Dendritic cell treated with granulocyte-macrophage colony-stimulating factor and Interleukin-4, amounts not matched to agents 40 ng/mL and 50 ng/mL, for 4 days (primary cell): ENCODE measurements at regions of chr1 and their contacts with region 1.

Region 1: DNA sequence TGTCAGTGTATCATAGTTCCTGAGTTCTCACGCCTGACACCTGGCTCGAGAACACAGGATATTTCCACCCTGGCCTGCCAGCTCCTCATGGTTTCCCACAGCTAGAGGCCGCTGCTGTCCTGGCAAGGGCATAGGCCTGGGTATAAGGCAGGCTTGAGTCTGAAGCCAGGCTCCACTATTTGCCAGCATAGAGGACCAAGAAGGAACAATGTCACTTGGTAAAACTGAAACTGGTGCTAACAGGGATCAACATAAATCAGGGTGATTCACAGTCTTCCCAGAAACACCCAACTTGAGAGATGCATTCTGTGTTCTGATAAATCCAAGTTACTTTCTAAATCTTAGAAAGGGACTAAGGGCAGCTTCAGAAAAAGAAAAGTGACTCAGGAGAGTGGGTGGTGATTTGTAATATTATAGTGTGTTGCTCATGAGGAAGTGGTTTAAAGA is 6.9 kb upstream of the S100A2 start:
- H3K4me3 Mint-ChIP-seq: no peak overlapping the region
- H3K27ac Mint-ChIP-seq: peak overlapping the region; percentile 62
- H3K4me1 Mint-ChIP-seq: peaks cover 44% of the 10 kb centered on the region
- H3K27me3 Mint-ChIP-seq: peaks cover 6% of the 10 kb centered on the region

Region 2: GRCh38 chr1:153352523-153352922 is 220.1 kb before region 1 on chr1:
- intact Hi-C with region 1: loop called (anchors 5 kb)
- H3K4me3 Mint-ChIP-seq: no peak overlapping the region
- H3K27ac Mint-ChIP-seq: no peak overlapping the region
- H3K4me1 Mint-ChIP-seq: peaks cover 36% of the 10 kb centered on the region
- H3K27me3 Mint-ChIP-seq: peaks cover 15% of the 10 kb centered on the region

Region 3: DNA sequence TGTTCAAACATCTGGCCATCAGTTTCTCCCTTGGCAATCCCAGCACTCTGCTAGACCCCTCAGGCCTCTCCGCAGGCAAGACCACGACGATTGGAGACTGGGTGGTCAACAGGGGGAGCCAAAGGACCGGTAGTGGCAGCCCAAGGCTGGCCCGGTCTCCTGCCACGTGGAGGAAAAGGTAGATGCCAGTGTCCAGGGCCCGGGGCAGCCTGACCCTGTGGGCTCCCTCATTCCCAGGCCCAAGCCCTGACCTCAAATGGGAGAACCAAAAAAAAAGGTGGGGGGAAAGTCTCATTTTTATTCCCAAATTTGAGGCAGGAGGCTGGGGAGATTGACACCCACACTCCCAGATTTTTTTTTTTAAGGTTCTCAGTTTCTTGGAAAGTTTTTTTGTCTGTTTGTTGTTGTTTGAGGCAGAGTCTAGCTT is 61.6 kb before region 1 on chr1:
- intact Hi-C with region 1: loop called (anchors 1 kb)
- H3K4me3 Mint-ChIP-seq: no peak overlapping the region
- H3K27ac Mint-ChIP-seq: no peak overlapping the region
- H3K4me1 Mint-ChIP-seq: peaks cover 42% of the 10 kb centered on the region
- H3K27me3 Mint-ChIP-seq: no peaks in the 10 kb centered on the region

Region 4: GRCh38 chr1:153532769-153533599 is 39.6 kb before region 1 on chr1:
- intact Hi-C with region 1: loop called (anchors 1 kb)
- H3K4me3 Mint-ChIP-seq: peak overlapping the region; percentile 95
- H3K27ac Mint-ChIP-seq: peak overlapping the region; percentile 91
- H3K4me1 Mint-ChIP-seq: peaks cover 63% of the 10 kb centered on the region
- H3K27me3 Mint-ChIP-seq: no peaks in the 10 kb centered on the region

Region 5: DNA sequence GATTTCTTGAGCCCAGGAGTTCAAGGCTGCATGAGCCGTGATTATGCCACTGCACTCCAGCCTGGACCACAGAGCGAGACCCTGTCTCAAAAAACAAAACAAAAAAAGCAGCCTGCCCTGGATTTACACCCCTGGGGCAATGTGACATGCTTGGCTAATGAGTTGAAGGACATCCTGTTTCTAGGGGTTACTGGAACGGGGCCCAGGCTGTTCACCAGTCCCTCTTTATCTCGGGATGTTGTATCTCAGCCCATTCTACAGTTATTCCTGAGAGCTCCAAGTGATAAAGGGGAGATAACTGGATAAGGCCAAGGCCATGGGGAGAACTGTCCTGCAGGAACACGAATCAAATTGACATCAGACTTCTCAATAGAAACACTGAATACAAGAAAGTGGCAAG is 14.7 kb after region 1 on chr1:
- intact Hi-C with region 1: no loop called
- H3K4me3 Mint-ChIP-seq: no peak overlapping the region
- H3K27ac Mint-ChIP-seq: no peak overlapping the region
- H3K4me1 Mint-ChIP-seq: peaks cover 12% of the 10 kb centered on the region
- H3K27me3 Mint-ChIP-seq: peaks cover 2% of the 10 kb centered on the region

Region 6: DNA sequence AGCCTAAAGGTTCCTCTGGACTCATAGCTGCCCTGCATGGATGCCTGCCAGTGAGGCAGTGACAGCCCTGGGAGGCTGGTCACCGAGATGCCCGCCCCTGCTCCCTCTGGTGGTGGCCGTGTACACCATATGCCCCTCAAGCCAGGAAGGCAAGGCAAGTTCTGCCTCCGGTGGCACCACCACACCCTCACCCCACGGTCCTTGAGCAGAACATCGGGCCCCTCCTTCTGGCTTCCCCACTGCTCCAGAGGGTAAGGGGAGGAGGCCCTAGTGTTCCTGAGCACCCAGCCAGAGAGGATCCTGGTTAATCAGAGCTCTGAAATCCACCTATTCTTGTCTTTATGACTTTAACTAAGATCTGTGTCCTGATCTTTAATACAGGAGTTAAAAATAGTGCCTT is 45.1 kb after region 1 on chr1:
- intact Hi-C with region 1: loop called (anchors 2 kb)
- H3K4me3 Mint-ChIP-seq: no peak overlapping the region
- H3K27ac Mint-ChIP-seq: peak overlapping the region; percentile 36
- H3K4me1 Mint-ChIP-seq: peaks cover 35% of the 10 kb centered on the region
- H3K27me3 Mint-ChIP-seq: peaks cover 2% of the 10 kb centered on the region

Region 7: GRCh38 chr1:153670859-153671627 is 98.5 kb after region 1 on chr1 and contains the start of gene ILF2:
- intact Hi-C with region 1: loop called (anchors 5 kb)
- H3K4me3 Mint-ChIP-seq: no peak within 1 kb of the TSS
- H3K27ac Mint-ChIP-seq: no peak within 1 kb of the TSS
- H3K4me1 Mint-ChIP-seq: peaks cover 5% of the 10 kb centered on the region
- H3K27me3 Mint-ChIP-seq: no peaks in the 10 kb centered on the region

Region 8: GRCh38 chr1:153749408-153750005 is 176.9 kb after region 1 on chr1:
- intact Hi-C with region 1: loop called (anchors 2 kb)
- H3K4me3 Mint-ChIP-seq: no peak overlapping the region
- H3K27ac Mint-ChIP-seq: no peak overlapping the region
- H3K4me1 Mint-ChIP-seq: peaks cover 28% of the 10 kb centered on the region
- H3K27me3 Mint-ChIP-seq: no peaks in the 10 kb centered on the region

Region 9: DNA sequence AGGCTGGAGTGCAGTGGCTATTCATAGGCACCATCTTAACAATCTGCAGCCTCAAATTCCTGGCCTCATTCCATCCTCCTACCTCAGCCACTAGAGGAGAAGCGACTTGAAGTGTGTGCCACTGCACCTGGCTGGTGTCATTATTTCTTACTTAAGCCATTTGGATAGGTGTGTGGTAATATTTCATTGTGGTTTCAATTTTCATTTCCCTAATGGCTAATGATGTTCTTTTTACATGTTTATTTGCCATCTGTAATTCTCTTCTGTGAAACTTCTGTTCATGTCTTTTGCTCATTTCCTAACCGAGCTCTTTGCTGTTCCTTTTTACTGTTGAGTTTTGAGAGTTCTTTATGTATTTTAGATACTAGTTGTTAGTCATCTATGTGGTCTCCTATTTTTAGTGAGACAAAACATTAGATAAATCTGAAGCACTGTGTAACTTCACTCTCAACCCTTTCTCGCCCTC is 269.4 kb after region 1 on chr1:
- intact Hi-C with region 1: no loop called
- H3K4me3 Mint-ChIP-seq: no peak overlapping the region
- H3K27ac Mint-ChIP-seq: no peak overlapping the region
- H3K4me1 Mint-ChIP-seq: peaks cover 29% of the 10 kb centered on the region
- H3K27me3 Mint-ChIP-seq: no peaks in the 10 kb centered on the region